Mammary epithelial cell (primary cell): ENCODE measurements at regions of chr1 and their contacts with region 1.

Region 1: DNA sequence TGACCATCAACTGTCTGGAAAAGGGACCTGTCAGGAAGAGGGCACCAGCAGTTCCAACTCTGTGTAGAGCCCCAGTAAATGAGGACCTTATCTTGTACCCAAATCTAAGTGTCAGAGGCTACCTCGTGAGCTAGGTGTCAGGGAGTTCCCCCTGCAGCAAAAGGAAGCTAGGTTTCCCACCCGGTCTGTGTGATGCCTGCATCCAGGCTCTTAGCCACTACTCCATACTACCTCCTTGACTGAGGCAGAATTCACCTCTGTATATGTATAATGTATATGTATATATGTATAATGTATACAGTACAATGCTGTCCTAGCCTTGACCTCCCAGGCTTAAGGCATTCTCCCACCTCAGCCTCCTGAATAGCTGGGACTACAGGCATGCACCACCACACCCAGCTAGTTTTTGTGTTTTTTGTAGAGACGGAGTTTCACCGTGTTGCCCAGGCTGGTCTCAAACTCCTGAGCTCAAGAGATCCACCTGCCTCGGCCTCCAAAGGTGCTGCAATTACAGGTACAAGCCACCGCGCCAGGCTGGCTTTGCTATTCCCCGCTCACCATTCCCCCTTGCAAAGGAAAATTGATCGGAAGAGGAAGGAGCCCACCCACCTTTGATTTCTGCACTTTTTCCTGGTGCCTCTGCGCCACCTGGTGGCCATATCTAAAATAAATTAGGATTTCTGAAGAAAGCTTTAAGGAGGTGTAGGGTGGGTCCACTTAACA is 15.7 kb upstream of the LUZP1 start:
- DNase-seq: no peak
- H3K4me3 ChIP-seq: no peak overlapping the region
- H3K27ac ChIP-seq: no peak overlapping the region
- H3K4me1 ChIP-seq: peaks cover 19% of the 10 kb centered on the region
- H3K27me3 ChIP-seq: no peaks in the 10 kb centered on the region
- CTCF ChIP-seq: peak; percentile 48 to 75

Region 2: GRCh38 chr1:23019094-23019862 is 165.1 kb before region 1 on chr1 and contains the start of gene KDM1A:
- CTCF ChIA-PET with region 1: no interaction called
- dilution Hi-C with region 1: no loop called
- in situ Hi-C with region 1: no loop called
- intact Hi-C with region 1: loop called (anchors 5 kb)
- DNase-seq: peak; percentile 97
- H3K4me3 ChIP-seq: peak within 1 kb of the TSS; percentile 81 to 99 (median 86)
- H3K27ac ChIP-seq: peak within 1 kb of the TSS; percentile 91
- H3K4me1 ChIP-seq: no peaks in the 10 kb centered on the region
- H3K27me3 ChIP-seq: no peaks in the 10 kb centered on the region
- CTCF ChIP-seq: peak; percentile 19 to 25
- total RNA-seq, gene KDM1A: 65.1 to 65.8 TPM

Region 3: DNA sequence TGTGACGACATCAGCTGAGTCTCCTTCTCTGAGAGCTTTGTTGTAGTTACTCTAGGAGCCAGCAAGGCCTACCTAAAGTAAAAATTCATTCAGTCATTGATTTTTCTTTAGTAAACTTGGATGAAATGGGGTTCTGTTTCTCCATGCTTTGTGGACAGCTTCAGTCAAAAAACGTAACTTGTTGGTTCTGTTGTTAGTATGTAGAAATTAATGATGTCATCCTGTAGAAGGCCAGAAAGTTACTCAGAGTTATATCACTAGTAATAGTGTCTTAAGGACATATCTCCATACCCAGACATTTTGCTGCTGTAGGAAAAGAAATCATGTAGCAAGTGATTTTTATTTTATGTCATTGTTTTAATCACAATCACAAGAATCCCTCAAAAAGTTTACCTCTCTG is 122.1 kb before region 1 on chr1:
- CTCF ChIA-PET with region 1: no interaction called
- dilution Hi-C with region 1: no loop called
- in situ Hi-C with region 1: no loop called
- intact Hi-C with region 1: no loop called
- DNase-seq: no peak
- H3K4me3 ChIP-seq: no peak overlapping the region
- H3K27ac ChIP-seq: no peak overlapping the region
- H3K4me1 ChIP-seq: no peaks in the 10 kb centered on the region
- H3K27me3 ChIP-seq: no peaks in the 10 kb centered on the region
- CTCF ChIP-seq: no peak

Region 4: DNA sequence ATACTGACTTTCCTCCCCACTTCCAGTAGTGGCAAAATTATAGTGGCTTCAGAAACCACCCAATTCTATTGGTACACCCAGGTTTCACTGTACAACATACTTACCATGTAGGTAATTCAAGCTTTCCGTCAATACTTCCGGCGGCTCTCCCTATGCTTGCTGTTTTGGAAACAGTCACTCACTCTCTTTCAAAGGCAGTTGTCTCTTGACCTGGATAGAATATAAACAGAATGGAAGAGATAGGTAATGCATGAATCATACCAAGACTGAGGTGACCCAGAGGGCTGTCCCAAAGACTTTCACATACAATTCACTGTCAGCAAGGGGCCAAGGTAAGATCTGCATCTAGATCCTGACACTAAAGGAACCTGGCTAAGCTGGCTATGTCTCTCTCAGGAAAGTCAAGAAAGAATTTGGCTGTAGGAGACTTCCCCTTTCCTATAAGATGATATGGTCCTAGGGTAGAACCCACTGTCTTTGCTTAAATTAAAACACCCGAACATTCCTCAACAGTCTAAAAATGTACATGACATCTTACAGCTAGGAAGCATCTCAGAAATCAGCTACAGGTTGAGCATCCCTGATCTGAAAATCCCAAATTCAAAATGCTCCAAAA is 75.3 kb before region 1 on chr1:
- CTCF ChIA-PET with region 1: interaction called, 3 read pairs
- dilution Hi-C with region 1: loop called (anchors 5 kb)
- in situ Hi-C with region 1: loop called in 1 of 2 experiments (anchors 5 kb)
- intact Hi-C with region 1: no loop called
- DNase-seq: no peak
- H3K4me3 ChIP-seq: no peak overlapping the region
- H3K27ac ChIP-seq: no peak overlapping the region
- H3K4me1 ChIP-seq: peaks cover 11% of the 10 kb centered on the region
- H3K27me3 ChIP-seq: no peaks in the 10 kb centered on the region
- CTCF ChIP-seq: no peak

Region 5: GRCh38 chr1:23198373-23198772 is 14.0 kb after region 1 on chr1:
- CTCF ChIA-PET with region 1: interaction called, 6 read pairs
- dilution Hi-C with region 1: no loop called
- in situ Hi-C with region 1: no loop called
- intact Hi-C with region 1: loop called (anchors 1 kb)
- DNase-seq: peak; percentile 93
- H3K4me3 ChIP-seq: no peak overlapping the region
- H3K27ac ChIP-seq: peak overlapping the region; percentile 99
- H3K4me1 ChIP-seq: peaks cover 60% of the 10 kb centered on the region
- H3K27me3 ChIP-seq: no peaks in the 10 kb centered on the region
- CTCF ChIP-seq: peak; percentile 13 to 18

Region 6: DNA sequence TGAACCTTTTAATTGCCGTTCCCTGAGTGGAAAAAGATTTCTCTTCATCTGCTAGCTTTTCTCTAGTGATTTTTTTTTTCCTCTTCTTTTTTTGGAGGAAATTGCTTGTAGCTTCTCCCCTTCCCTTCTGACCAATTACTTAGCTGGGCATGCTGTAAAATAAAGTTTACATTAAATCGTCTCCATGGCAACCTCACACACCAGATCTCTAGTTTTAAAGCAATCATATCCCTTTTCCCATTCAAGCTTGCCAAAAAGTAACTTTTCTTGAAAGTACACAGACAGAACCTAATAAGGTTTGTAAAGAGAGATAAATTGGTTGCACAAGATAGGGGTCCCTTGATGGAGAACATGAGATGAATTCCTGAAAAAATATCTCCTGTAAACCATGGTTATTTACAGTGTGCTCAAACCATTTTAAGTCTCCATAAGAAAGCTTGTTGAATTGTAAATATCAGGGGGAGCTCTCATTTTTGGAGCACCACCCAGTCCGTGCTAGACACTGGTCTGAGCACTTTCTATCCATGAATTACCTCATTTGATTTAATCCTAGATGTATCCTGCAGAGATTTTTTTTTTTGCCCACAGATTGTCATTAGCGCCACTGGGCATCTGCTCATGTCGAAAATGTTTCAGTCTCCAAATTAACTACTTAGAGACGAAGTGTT is 65.5 kb after region 1 on chr1:
- CTCF ChIA-PET with region 1: no interaction called
- dilution Hi-C with region 1: no loop called
- in situ Hi-C with region 1: no loop called
- intact Hi-C with region 1: no loop called
- DNase-seq: no peak
- H3K4me3 ChIP-seq: no peak overlapping the region
- H3K27ac ChIP-seq: no peak overlapping the region
- H3K4me1 ChIP-seq: peaks cover 10% of the 10 kb centered on the region
- H3K27me3 ChIP-seq: no peaks in the 10 kb centered on the region
- CTCF ChIP-seq: no peak

Region 7: GRCh38 chr1:23263380-23263887 is 79.1 kb after region 1 on chr1:
- CTCF ChIA-PET with region 1: no interaction called
- dilution Hi-C with region 1: loop called (anchors 5 kb)
- in situ Hi-C with region 1: no loop called
- intact Hi-C with region 1: no loop called
- DNase-seq: no peak
- H3K4me3 ChIP-seq: no peak overlapping the region
- H3K27ac ChIP-seq: no peak overlapping the region
- H3K4me1 ChIP-seq: peaks cover 3% of the 10 kb centered on the region
- H3K27me3 ChIP-seq: no peaks in the 10 kb centered on the region
- CTCF ChIP-seq: no peak